ENCODE measurements at regions of chr22 and their contacts with region 1.

Region 1: GRCh38 chr22:37544955-37545699 is 15.2 kb upstream of the CDC42EP1 start:
- DNase-seq: peak; percentile 39
- H3K4me3 Mint-ChIP-seq: no peak overlapping the region
- H3K27ac Mint-ChIP-seq: no peak overlapping the region
- H3K4me1 Mint-ChIP-seq: peaks cover 25% of the 10 kb centered on the region
- H3K27me3 Mint-ChIP-seq: peaks cover 8% of the 10 kb centered on the region

Region 2: GRCh38 chr22:37362621-37363020 is 182.5 kb before region 1 on chr22:
- intact Hi-C with region 1: no loop called
- DNase-seq: no peak
- H3K4me3 Mint-ChIP-seq: no peak overlapping the region
- H3K27ac Mint-ChIP-seq: no peak overlapping the region
- H3K4me1 Mint-ChIP-seq: no peaks in the 10 kb centered on the region
- H3K27me3 Mint-ChIP-seq: peaks cover 4% of the 10 kb centered on the region

Region 3: GRCh38 chr22:37561212-37562048 is 16.3 kb after region 1 on chr22:
- intact Hi-C with region 1: loop called (anchors 1 kb)
- DNase-seq: peak; percentile 62
- H3K4me3 Mint-ChIP-seq: peak overlapping the region; percentile 58
- H3K27ac Mint-ChIP-seq: peak overlapping the region; percentile 14
- H3K4me1 Mint-ChIP-seq: peaks cover 9% of the 10 kb centered on the region
- H3K27me3 Mint-ChIP-seq: peaks cover 57% of the 10 kb centered on the region

Region 4: DNA sequence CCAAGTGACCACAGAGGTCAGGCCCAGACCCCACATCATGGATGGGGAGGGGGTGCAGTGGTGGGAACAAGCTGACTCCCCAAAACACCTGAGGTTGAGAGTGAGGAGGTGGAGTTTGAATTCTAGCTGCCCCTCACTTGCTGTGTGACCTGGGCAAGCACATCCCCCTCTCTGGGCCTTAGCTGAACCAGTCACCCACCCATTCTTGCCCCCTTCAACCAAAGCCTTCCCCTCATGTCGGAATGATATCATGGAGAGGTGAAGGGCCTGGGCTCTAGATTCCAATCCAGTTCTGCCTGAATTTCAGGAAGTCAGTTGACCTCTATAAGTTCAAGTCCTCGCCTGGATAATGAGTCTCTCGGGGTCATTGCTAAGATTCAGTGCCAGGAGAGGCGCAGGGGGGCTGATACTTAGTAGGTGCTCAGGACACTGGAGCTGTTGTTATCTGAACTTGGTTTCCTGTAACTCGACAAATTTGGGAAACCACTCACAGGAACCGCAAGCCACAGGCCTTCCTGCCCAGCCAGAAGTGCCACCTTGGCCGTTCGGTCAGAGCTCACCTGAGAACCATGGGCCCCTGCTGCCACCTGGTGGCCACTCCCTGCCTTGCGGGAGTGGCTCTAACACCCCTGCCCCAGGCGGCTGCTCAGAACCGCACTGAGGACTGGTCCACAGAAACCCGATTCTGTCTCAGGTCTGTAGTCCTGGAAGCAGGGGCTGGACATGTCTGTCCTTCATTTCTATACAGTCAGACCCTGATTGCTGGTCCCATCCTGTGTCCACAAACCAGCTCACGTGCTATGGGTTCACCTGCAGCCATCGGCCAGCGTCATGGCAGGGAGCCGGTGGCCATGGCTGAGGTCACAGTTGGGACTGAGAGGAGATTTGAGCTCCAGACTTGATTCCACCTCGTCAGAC is 22.0 kb after region 1 on chr22:
- intact Hi-C with region 1: loop called (anchors 1 kb)
- DNase-seq: peak; percentile 87
- H3K4me3 Mint-ChIP-seq: no peak overlapping the region
- H3K27ac Mint-ChIP-seq: peak overlapping the region; percentile 61
- H3K4me1 Mint-ChIP-seq: peaks cover 14% of the 10 kb centered on the region
- H3K27me3 Mint-ChIP-seq: peaks cover 25% of the 10 kb centered on the region